IMR-90 (cell line): ENCODE measurements at regions of chr3 and their contacts with region 1.

Region 1: GRCh38 chr3:124730129-124730940 is at the start of gene UMPS:
- DNase-seq: peak; percentile 73
- ATAC-seq: peak; percentile 98
- H3K4me3 ChIP-seq: peak within 1 kb of the TSS; percentile 72
- H3K27ac ChIP-seq: peak within 1 kb of the TSS; percentile 67
- H3K4me1 ChIP-seq: no peaks in the 10 kb centered on the region
- H3K27me3 ChIP-seq: peaks cover 4% of the 10 kb centered on the region; the same call in 1 of the 2 replicates
- CTCF ChIP-seq: no peak
- POLR2A ChIP-seq: peak; percentile 64; the same call in 1 of the 2 replicates
- RAD21 ChIP-seq: no peak
- total RNA-seq, gene UMPS: 26.7 and 40.5 TPM in 2 replicates

Region 2: GRCh38 chr3:124688581-124689454 is 41.5 kb before region 1 on chr3:
- CTCF ChIA-PET with region 1: no interaction called
- POLR2A ChIA-PET with region 1: no interaction called
- dilution Hi-C with region 1: no loop called
- in situ Hi-C with region 1: no loop called
- intact Hi-C with region 1: loop called (anchors 2 kb)
- DNase-seq: peak; percentile 78
- ATAC-seq: peak; percentile 95
- H3K4me3 ChIP-seq: no peak overlapping the region
- H3K27ac ChIP-seq: no peak overlapping the region
- H3K4me1 ChIP-seq: no peaks in the 10 kb centered on the region
- H3K27me3 ChIP-seq: peaks cover 11% of the 10 kb centered on the region
- CTCF ChIP-seq: peak; percentile 86
- POLR2A ChIP-seq: no peak
- RAD21 ChIP-seq: peak; percentile 87

Region 3: DNA sequence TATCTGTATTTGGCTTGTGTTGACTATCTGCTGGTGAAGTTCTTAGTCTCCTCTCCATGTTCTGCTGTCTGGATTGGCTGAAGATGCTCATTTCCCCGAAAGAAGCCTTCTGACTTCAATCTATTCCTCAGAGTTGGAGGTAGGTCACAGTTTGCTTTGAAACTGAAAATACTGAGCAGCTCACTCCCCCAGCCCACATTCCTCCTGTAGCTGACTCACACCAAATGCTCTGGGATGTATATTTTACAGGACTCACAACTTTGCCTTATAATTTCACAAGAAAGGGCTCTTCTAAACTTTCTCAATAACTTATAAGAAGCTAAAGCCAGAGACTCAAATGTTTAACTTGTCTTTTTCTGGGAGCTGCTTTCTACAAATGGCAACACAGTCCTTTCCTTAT is 826.0 kb after region 1 on chr3:
- CTCF ChIA-PET with region 1: no interaction called
- POLR2A ChIA-PET with region 1: no interaction called
- dilution Hi-C with region 1: no loop called
- in situ Hi-C with region 1: loop called (anchors 25 kb)
- intact Hi-C with region 1: no loop called
- DNase-seq: peak; percentile 89
- ATAC-seq: peak; percentile 99
- H3K4me3 ChIP-seq: no peak overlapping the region
- H3K27ac ChIP-seq: peak overlapping the region; percentile 31; the same call in 1 of the 2 replicates
- H3K4me1 ChIP-seq: peaks cover 8% of the 10 kb centered on the region; the same call in 1 of the 2 replicates
- H3K27me3 ChIP-seq: no peaks in the 10 kb centered on the region
- CTCF ChIP-seq: no peak
- POLR2A ChIP-seq: no peak
- RAD21 ChIP-seq: no peak